Panc1 (cell line): ENCODE measurements at regions of chr12 and their contacts with region 1.

Region 1: GRCh38 chr12:65823513-65824375 is 539 bp upstream of the HMGA2 start:
- DNase-seq: peak; percentile 69
- ATAC-seq: peak; percentile 65
- H3K4me3 ChIP-seq: peak overlapping the region; percentile 79 to 82
- H3K27ac ChIP-seq: peak overlapping the region; percentile 97
- H3K4me1 ChIP-seq: peaks cover 34% of the 10 kb centered on the region
- H3K27me3 ChIP-seq: no peaks in the 10 kb centered on the region
- CTCF ChIP-seq: no peak

Region 2: GRCh38 chr12:65649126-65649525 is 174.6 kb before region 1 on chr12:
- CTCF ChIA-PET with region 1: no interaction called
- POLR2A ChIA-PET with region 1: no interaction called
- in situ Hi-C with region 1: no loop called
- intact Hi-C with region 1: no loop called
- DNase-seq: peak; percentile 82
- ATAC-seq: peak; percentile 99
- H3K4me3 ChIP-seq: no peak overlapping the region
- H3K27ac ChIP-seq: peak overlapping the region; percentile 66
- H3K4me1 ChIP-seq: peaks cover 6% of the 10 kb centered on the region; the same call in 1 of the 2 replicates
- H3K27me3 ChIP-seq: no peaks in the 10 kb centered on the region
- CTCF ChIP-seq: no peak

Region 3: GRCh38 chr12:65740873-65741600 is 82.7 kb before region 1 on chr12:
- CTCF ChIA-PET with region 1: no interaction called
- POLR2A ChIA-PET with region 1: no interaction called
- in situ Hi-C with region 1: no loop called
- intact Hi-C with region 1: loop called (anchors 10 kb)
- DNase-seq: peak; percentile 27
- ATAC-seq: peak; percentile 95
- H3K4me3 ChIP-seq: peak overlapping the region; percentile 75 to 83
- H3K27ac ChIP-seq: peak overlapping the region; percentile 93
- H3K4me1 ChIP-seq: peaks cover 7% of the 10 kb centered on the region
- H3K27me3 ChIP-seq: no peaks in the 10 kb centered on the region
- CTCF ChIP-seq: no peak

Region 4: GRCh38 chr12:65881965-65882413 is 58.2 kb after region 1 on chr12:
- CTCF ChIA-PET with region 1: no interaction called
- POLR2A ChIA-PET with region 1: no interaction called
- in situ Hi-C with region 1: no loop called
- intact Hi-C with region 1: loop called (anchors 2 kb)
- DNase-seq: no peak
- ATAC-seq: peak; percentile 24
- H3K4me3 ChIP-seq: no peak overlapping the region; a peak in 1 of 4 replicates
- H3K27ac ChIP-seq: peak overlapping the region; percentile 98
- H3K4me1 ChIP-seq: peaks cover 89% of the 10 kb centered on the region
- H3K27me3 ChIP-seq: no peaks in the 10 kb centered on the region
- CTCF ChIP-seq: no peak

Region 5: GRCh38 chr12:66035288-66035966 is 211.7 kb after region 1 on chr12:
- CTCF ChIA-PET with region 1: no interaction called
- POLR2A ChIA-PET with region 1: no interaction called
- in situ Hi-C with region 1: no loop called
- intact Hi-C with region 1: no loop called
- DNase-seq: no peak
- ATAC-seq: peak; percentile 75; the same call in 1 of the 2 replicates
- H3K4me3 ChIP-seq: no peak overlapping the region
- H3K27ac ChIP-seq: peak overlapping the region; percentile 0; the same call in 1 of the 2 replicates
- H3K4me1 ChIP-seq: no peaks in the 10 kb centered on the region
- H3K27me3 ChIP-seq: no peaks in the 10 kb centered on the region
- CTCF ChIP-seq: peak; percentile 66

Region 6: GRCh38 chr12:66119870-66120241 is 296.1 kb after region 1 on chr12:
- CTCF ChIA-PET with region 1: no interaction called
- POLR2A ChIA-PET with region 1: interaction called, 11 read pairs
- in situ Hi-C with region 1: no loop called
- intact Hi-C with region 1: no loop called
- DNase-seq: no peak
- ATAC-seq: no peak
- H3K4me3 ChIP-seq: no peak overlapping the region
- H3K27ac ChIP-seq: no peak overlapping the region
- H3K4me1 ChIP-seq: no peaks in the 10 kb centered on the region
- H3K27me3 ChIP-seq: no peaks in the 10 kb centered on the region
- CTCF ChIP-seq: no peak